ENCODE measurements at regions of chr5 and their contacts with region 1.

Region 1: GRCh38 chr5:56270568-56271392 is 37.6 kb upstream of the ANKRD55 start:
- DNase-seq: peak; percentile 45 to 82 (median 72)
- ATAC-seq: peak; percentile 98
- H3K4me3 ChIP-seq: no peak overlapping the region
- H3K4me3 Mint-ChIP-seq: no peak overlapping the region
- H3K27ac ChIP-seq: no peak overlapping the region
- H3K27ac Mint-ChIP-seq: peak overlapping the region; percentile 2
- H3K4me1 ChIP-seq: peaks cover 5% of the 10 kb centered on the region
- H3K4me1 Mint-ChIP-seq: peaks cover 8% of the 10 kb centered on the region
- H3K27me3 ChIP-seq: no peaks in the 10 kb centered on the region
- H3K27me3 Mint-ChIP-seq: peaks cover 3% of the 10 kb centered on the region
- CTCF ChIP-seq: peak; percentile 95

Region 2: GRCh38 chr5:55936100-55936693 is 334.6 kb before region 1 on chr5:
- CTCF ChIA-PET with region 1: interaction called, 16 read pairs
- POLR2A ChIA-PET with region 1: no interaction called
- intact Hi-C with region 1: loop called (anchors 5 kb)
- DNase-seq: peak; percentile 53 to 87 (median 80)
- ATAC-seq: peak; percentile 92
- H3K4me3 ChIP-seq: no peak overlapping the region
- H3K4me3 Mint-ChIP-seq: no peak overlapping the region
- H3K27ac ChIP-seq: no peak overlapping the region
- H3K27ac Mint-ChIP-seq: peak overlapping the region; percentile 55
- H3K4me1 ChIP-seq: no peaks in the 10 kb centered on the region
- H3K4me1 Mint-ChIP-seq: peaks cover 10% of the 10 kb centered on the region
- H3K27me3 ChIP-seq: no peaks in the 10 kb centered on the region
- H3K27me3 Mint-ChIP-seq: no peaks in the 10 kb centered on the region
- CTCF ChIP-seq: peak; percentile 86

Region 3: DNA sequence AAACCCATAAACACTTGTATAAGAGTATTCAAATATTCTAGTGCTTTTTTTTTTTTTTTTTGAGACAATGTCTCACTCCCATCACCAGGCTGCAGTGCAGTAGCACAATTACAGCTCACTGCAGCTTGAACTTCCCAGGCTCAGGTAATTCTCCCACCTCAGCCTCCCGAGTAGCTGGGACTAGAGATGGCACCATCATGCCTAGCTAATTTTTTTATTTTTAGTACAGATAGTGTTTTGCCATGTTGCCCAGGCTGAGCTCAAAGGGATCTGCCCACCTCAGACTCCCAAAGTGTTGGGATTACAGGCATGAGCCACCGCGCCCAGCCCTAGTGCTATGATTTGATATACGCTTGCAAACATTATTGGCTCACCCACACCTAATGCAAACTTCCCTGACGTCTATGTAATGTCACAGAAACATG is 287.8 kb before region 1 on chr5:
- CTCF ChIA-PET with region 1: no interaction called
- POLR2A ChIA-PET with region 1: no interaction called
- intact Hi-C with region 1: loop called (anchors 2 to 5 kb)
- DNase-seq: peak in 4 of 9 experiments; percentile 18 to 62 (median 42)
- ATAC-seq: peak; percentile 35
- H3K4me3 ChIP-seq: no peak overlapping the region
- H3K4me3 Mint-ChIP-seq: peak overlapping the region; percentile 59
- H3K27ac ChIP-seq: no peak overlapping the region
- H3K27ac Mint-ChIP-seq: peak overlapping the region; percentile 64
- H3K4me1 ChIP-seq: peaks cover 56% of the 10 kb centered on the region
- H3K4me1 Mint-ChIP-seq: peaks cover 69% of the 10 kb centered on the region
- H3K27me3 ChIP-seq: no peaks in the 10 kb centered on the region
- H3K27me3 Mint-ChIP-seq: no peaks in the 10 kb centered on the region
- CTCF ChIP-seq: peak; percentile 50

Region 4: GRCh38 chr5:56625541-56625940 is 354.8 kb after region 1 on chr5:
- CTCF ChIA-PET with region 1: no interaction called
- POLR2A ChIA-PET with region 1: no interaction called
- intact Hi-C with region 1: no loop called
- DNase-seq: no peak
- ATAC-seq: no peak
- H3K4me3 ChIP-seq: no peak overlapping the region
- H3K4me3 Mint-ChIP-seq: no peak overlapping the region
- H3K27ac ChIP-seq: no peak overlapping the region
- H3K27ac Mint-ChIP-seq: no peak overlapping the region
- H3K4me1 ChIP-seq: no peaks in the 10 kb centered on the region
- H3K4me1 Mint-ChIP-seq: no peaks in the 10 kb centered on the region
- H3K27me3 ChIP-seq: no peaks in the 10 kb centered on the region
- H3K27me3 Mint-ChIP-seq: peaks cover 2% of the 10 kb centered on the region
- CTCF ChIP-seq: no peak

Region 5: GRCh38 chr5:56833325-56833724 is 562.5 kb after region 1 on chr5:
- CTCF ChIA-PET with region 1: interaction called, 89 read pairs
- POLR2A ChIA-PET with region 1: interaction called, 10 read pairs
- intact Hi-C with region 1: loop called (anchors 1 kb)
- DNase-seq: no peak
- ATAC-seq: no peak
- H3K4me3 ChIP-seq: no peak overlapping the region
- H3K4me3 Mint-ChIP-seq: no peak overlapping the region
- H3K27ac ChIP-seq: no peak overlapping the region
- H3K27ac Mint-ChIP-seq: peak overlapping the region; percentile 41
- H3K4me1 ChIP-seq: peaks cover 40% of the 10 kb centered on the region
- H3K4me1 Mint-ChIP-seq: peaks cover 90% of the 10 kb centered on the region
- H3K27me3 ChIP-seq: no peaks in the 10 kb centered on the region
- H3K27me3 Mint-ChIP-seq: no peaks in the 10 kb centered on the region
- CTCF ChIP-seq: no peak

Region 6: DNA sequence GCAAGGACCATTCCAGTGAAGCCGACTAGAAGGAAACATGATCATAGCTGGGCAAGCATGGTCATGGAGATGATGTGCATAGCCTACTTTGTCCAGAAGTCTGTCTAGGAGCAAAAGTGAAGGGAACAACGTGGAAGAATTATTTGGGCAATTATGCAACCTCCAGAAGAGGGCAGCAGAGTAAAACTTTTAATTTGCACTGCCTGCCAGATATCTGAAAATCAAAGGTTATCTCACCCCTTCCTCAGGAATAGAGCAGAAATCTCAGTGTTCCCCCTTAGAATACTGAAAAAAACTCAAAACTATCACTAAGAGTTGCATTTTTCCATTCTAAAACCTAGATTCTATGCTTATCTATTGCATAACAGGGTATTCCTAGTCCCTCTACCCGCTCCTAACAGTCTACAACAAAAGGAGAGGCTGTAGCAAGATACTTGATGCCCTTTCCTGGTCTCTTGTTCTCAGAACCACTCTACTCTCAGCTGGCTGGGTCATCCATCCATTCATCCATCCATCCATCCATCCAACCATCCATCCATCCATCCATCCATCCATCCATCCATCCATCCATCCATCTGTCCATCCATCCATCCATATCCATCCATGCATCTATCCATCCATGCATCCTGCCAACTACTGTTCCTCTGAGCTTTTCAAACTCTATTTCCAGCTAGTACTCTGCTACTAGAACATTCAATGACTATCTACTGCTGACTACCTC is 630.2 kb after region 1 on chr5:
- CTCF ChIA-PET with region 1: interaction called, 6 read pairs
- POLR2A ChIA-PET with region 1: no interaction called
- intact Hi-C with region 1: loop called in 1 of 2 experiments (anchors 1 kb)
- DNase-seq: peak in 7 of 9 experiments; percentile 12 to 73 (median 38)
- ATAC-seq: peak; percentile 65
- H3K4me3 ChIP-seq: no peak overlapping the region
- H3K4me3 Mint-ChIP-seq: no peak overlapping the region
- H3K27ac ChIP-seq: no peak overlapping the region
- H3K27ac Mint-ChIP-seq: no peak overlapping the region
- H3K4me1 ChIP-seq: no peaks in the 10 kb centered on the region
- H3K4me1 Mint-ChIP-seq: no peaks in the 10 kb centered on the region
- H3K27me3 ChIP-seq: no peaks in the 10 kb centered on the region
- H3K27me3 Mint-ChIP-seq: no peaks in the 10 kb centered on the region
- CTCF ChIP-seq: peak; percentile 84

Region 7: GRCh38 chr5:57137401-57137800 is 866.6 kb after region 1 on chr5:
- CTCF ChIA-PET with region 1: interaction called, 4 read pairs
- POLR2A ChIA-PET with region 1: no interaction called
- intact Hi-C with region 1: loop called (anchors 1 to 2 kb)
- DNase-seq: peak in 1 of 9 experiments; percentile 2
- ATAC-seq: no peak
- H3K4me3 ChIP-seq: no peak overlapping the region
- H3K4me3 Mint-ChIP-seq: no peak overlapping the region
- H3K27ac ChIP-seq: no peak overlapping the region
- H3K27ac Mint-ChIP-seq: no peak overlapping the region
- H3K4me1 ChIP-seq: no peaks in the 10 kb centered on the region
- H3K4me1 Mint-ChIP-seq: no peaks in the 10 kb centered on the region
- H3K27me3 ChIP-seq: no peaks in the 10 kb centered on the region
- H3K27me3 Mint-ChIP-seq: no peaks in the 10 kb centered on the region
- CTCF ChIP-seq: no peak

Region 8: DNA sequence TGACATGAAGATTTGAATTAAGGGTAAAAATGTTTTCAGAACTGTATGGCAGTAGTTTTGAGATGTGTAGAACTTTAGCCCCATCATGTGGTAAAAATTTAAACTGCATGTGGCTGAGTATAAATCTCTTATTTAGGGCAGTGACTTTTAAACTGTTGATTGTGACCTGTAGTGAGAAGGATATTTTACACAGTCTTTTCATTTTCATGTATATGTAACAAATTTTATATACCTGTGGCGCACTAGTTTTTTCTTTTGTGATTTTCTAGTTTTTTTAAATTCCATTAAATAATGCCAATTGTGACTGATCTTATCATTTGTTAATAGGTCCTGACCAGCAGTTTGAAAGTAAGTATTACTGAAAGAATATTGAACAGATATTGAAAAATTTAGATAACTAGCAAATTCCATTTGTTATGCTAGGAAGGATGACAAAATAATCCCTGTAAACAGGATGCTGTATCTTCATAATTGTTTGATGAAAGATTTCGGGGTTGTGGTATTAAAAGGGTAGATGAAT is 950.3 kb after region 1 on chr5:
- CTCF ChIA-PET with region 1: interaction called, 11 read pairs
- POLR2A ChIA-PET with region 1: no interaction called
- intact Hi-C with region 1: loop called (anchors 1 to 2 kb)
- DNase-seq: peak in 3 of 9 experiments; percentile 51 to 83 (median 78)
- ATAC-seq: peak; percentile 83
- H3K4me3 ChIP-seq: no peak overlapping the region
- H3K4me3 Mint-ChIP-seq: no peak overlapping the region
- H3K27ac ChIP-seq: no peak overlapping the region
- H3K27ac Mint-ChIP-seq: peak overlapping the region; percentile 64
- H3K4me1 ChIP-seq: peaks cover 14% of the 10 kb centered on the region
- H3K4me1 Mint-ChIP-seq: peaks cover 53% of the 10 kb centered on the region
- H3K27me3 ChIP-seq: no peaks in the 10 kb centered on the region
- H3K27me3 Mint-ChIP-seq: no peaks in the 10 kb centered on the region
- CTCF ChIP-seq: peak; percentile 99